Activated CD8-positive, alpha-beta T cell treated with anti-CD3 and anti-CD28 coated beads for 36 hours (primary cell): ENCODE measurements at regions of chr21 and their contacts with region 1.

Region 1: DNA sequence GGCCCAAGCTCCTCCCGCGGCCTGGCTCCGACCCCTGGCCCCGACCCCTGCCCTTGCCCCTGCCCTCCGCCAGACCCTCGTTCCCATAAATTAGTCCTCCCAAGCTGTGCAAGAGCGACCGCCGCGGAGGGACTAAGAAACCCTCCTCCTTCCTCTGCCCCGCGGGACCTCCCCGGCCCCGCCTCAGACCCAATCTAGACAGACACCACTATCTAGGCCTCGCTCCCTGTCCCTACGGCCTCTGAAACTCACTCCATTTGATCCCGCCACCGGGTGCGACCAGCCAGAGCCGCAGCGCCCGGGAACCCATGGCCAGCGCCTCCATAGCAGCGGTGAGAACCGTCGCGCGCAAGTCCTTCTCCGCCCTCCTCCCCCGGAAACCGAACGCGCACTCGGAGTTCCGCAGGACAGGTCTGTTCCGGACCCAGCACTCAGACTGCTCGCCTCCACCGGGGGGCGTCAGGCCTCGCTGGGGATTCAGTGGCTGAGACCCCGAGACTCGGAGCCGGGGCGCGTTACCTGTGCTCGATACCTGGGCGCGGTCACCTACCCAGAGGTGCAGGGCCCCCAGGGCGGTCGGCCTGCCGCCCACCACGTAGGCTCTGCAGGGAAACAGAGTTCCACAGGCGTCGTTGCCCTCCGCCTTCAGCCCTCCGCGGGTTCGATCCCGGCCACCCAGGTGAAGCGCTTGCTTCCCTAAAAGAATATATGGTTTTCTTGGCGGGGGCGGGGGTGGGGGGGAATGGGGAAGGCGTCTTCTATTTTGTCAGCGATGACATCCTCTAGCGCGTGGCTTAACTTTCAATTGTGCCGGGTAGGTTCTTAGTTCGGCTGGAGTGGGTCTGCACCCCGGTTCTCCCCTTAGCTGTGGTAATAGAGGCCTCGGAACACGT is at the start of gene MRPL39:
- DNase-seq: peak; percentile 92
- ATAC-seq: peak; percentile 94
- H3K4me3 Mint-ChIP-seq: peak within 1 kb of the TSS; percentile 100
- H3K27ac Mint-ChIP-seq: peak within 1 kb of the TSS; percentile 99
- H3K4me1 Mint-ChIP-seq: peaks cover 33% of the 10 kb centered on the region
- H3K27me3 Mint-ChIP-seq: no peaks in the 10 kb centered on the region
- CTCF ChIP-seq: peak; percentile 50
- total RNA-seq, gene MRPL39: 67.1 to 71.0 TPM

Region 2: GRCh38 chr21:25199944-25200343 is 407.5 kb before region 1 on chr21:
- CTCF ChIA-PET with region 1: no interaction called
- POLR2A ChIA-PET with region 1: no interaction called
- intact Hi-C with region 1: no loop called
- DNase-seq: no peak
- ATAC-seq: no peak
- H3K4me3 Mint-ChIP-seq: no peak overlapping the region
- H3K27ac Mint-ChIP-seq: no peak overlapping the region
- H3K4me1 Mint-ChIP-seq: no peaks in the 10 kb centered on the region
- H3K27me3 Mint-ChIP-seq: no peaks in the 10 kb centered on the region
- CTCF ChIP-seq: no peak

Region 3: GRCh38 chr21:25243808-25244207 is 363.6 kb before region 1 on chr21:
- CTCF ChIA-PET with region 1: no interaction called
- POLR2A ChIA-PET with region 1: no interaction called
- intact Hi-C with region 1: no loop called
- DNase-seq: no peak
- ATAC-seq: no peak
- H3K4me3 Mint-ChIP-seq: no peak overlapping the region
- H3K27ac Mint-ChIP-seq: no peak overlapping the region
- H3K4me1 Mint-ChIP-seq: no peaks in the 10 kb centered on the region
- H3K27me3 Mint-ChIP-seq: no peaks in the 10 kb centered on the region
- CTCF ChIP-seq: no peak

Region 4: DNA sequence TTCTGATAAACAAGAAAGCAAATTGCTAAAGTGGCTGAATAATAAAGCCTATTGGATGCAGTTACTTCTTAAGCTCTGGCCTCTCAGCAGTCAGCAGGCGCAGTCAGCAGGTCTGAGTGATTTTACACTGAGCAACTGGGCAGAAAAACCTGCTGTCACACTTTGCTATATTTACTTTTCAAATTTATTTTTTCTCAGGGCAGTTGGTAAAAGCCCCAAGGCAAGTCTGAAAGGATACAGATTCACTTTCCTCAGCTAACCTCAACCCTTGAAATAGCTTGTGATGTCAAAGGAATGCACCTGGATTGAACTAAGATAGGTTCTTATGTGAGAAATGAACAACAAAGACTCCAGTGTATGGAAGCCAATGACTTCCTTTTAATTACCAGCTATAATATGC is 93.3 kb after region 1 on chr21:
- CTCF ChIA-PET with region 1: interaction called, 79 read pairs
- POLR2A ChIA-PET with region 1: no interaction called
- intact Hi-C with region 1: no loop called
- DNase-seq: no peak
- ATAC-seq: no peak
- H3K4me3 Mint-ChIP-seq: no peak overlapping the region
- H3K27ac Mint-ChIP-seq: no peak overlapping the region
- H3K4me1 Mint-ChIP-seq: no peaks in the 10 kb centered on the region
- H3K27me3 Mint-ChIP-seq: no peaks in the 10 kb centered on the region
- CTCF ChIP-seq: no peak

Region 5: DNA sequence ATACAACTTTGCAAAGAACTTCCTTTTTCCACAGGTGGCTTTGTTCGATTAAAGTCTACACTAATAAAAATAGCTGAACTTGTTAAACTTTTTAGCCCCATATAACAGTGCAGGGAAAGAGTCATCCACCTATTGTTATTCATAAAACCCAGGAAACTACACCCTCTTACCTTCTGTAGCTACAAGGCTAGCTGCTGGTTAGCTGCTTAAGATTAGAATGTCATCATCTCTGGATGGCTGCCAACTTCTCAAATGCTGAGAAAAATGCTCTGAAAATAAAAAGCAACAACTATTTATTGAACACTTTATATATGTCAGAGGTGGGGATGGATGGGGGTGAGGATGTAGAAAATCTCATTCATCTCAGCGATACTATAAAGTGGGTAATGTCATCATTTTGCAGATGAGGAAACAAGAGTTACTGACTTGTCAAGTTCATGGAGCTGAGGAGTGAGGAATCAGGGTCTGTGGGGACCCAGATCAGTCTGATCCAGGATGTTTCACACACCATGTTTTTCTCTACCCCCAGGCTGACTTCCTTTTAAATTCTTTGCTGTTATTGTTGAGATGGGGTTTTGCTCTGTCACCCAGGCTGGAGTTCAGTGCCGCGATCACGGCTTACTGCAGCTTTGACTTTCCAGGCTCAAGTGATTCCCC is 110.2 kb after region 1 on chr21:
- CTCF ChIA-PET with region 1: interaction called, 30 read pairs
- POLR2A ChIA-PET with region 1: interaction called, 4 read pairs
- intact Hi-C with region 1: no loop called
- DNase-seq: no peak
- ATAC-seq: no peak
- H3K4me3 Mint-ChIP-seq: no peak overlapping the region
- H3K27ac Mint-ChIP-seq: no peak overlapping the region
- H3K4me1 Mint-ChIP-seq: no peaks in the 10 kb centered on the region
- H3K27me3 Mint-ChIP-seq: no peaks in the 10 kb centered on the region
- CTCF ChIP-seq: no peak

Region 6: DNA sequence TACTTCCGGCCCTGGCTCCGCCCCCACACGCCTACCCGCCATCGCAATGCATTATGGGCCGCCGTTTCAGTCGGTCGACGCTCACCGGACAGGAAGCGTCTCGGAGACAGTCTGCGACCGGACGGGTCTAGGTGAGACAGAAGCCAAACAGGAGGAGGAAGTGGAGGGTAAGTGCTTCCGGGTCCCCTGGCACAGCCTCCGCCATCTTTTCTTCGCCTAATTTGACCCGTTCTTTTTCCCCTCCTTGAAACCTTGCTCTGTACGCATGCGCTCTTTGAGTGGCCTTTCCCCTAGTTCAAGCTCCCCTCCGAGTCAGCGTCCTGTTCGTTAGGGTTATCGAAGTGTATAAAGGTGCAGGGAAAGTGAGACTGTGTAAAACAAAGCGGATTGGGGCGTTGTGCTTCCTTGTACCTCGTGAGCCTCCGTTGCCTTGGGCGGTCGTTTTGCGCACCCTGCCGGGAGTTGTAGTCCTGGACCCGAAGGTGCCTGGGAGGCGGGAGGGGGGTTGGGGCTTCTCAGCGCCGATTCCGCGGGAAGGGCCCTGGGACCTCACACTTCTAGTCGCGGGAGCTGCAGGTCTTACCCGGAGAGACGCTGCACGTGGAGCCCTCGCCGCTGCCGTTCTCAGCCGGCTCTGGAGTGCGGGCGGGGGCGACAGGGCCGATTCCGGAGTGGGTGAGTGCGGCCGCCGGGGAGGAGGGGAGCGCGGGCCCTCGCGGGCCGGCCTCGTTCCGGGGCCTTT is 127.7 kb after region 1 on chr21 and contains the starts of genes ATP5PF and GABPA:
- CTCF ChIA-PET with region 1: interaction called, 11 read pairs
- POLR2A ChIA-PET with region 1: interaction called, 7 read pairs
- intact Hi-C with region 1: loop called (anchors 1 kb)
- DNase-seq: peak; percentile 98
- ATAC-seq: peak; percentile 94
- H3K4me3 Mint-ChIP-seq: peak within 1 kb of the TSS; percentile 91
- H3K27ac Mint-ChIP-seq: peak within 1 kb of the TSS; percentile 100
- H3K4me1 Mint-ChIP-seq: peaks cover 50% of the 10 kb centered on the region
- H3K27me3 Mint-ChIP-seq: no peaks in the 10 kb centered on the region
- CTCF ChIP-seq: no peak
- total RNA-seq, gene ATP5PF: 154 to 159 TPM
- total RNA-seq, gene GABPA: 21.8 to 24.9 TPM

Region 7: DNA sequence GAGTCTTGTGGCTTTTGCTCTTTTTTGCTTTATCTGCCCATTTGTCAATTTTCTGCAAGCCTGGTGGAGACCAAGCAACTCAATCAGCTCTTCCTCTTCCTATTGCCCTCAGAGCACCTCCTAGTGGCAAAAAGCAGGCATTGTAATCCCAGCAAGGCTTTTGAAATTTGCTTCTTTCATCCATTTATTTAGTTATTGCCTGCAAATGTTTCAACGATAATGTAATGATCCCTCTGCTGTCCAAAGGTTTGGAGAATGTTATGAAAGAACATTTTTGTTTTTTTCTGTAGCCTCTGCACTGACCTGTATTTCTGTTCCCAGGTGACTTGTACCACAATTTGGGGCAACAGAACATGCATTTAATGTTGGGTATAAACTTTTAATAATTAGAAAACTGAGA is 255.2 kb after region 1 on chr21:
- CTCF ChIA-PET with region 1: interaction called, 13 read pairs
- POLR2A ChIA-PET with region 1: no interaction called
- intact Hi-C with region 1: loop called (anchors 5 kb)
- DNase-seq: peak; percentile 33
- ATAC-seq: peak; percentile 58
- H3K4me3 Mint-ChIP-seq: no peak overlapping the region
- H3K27ac Mint-ChIP-seq: no peak overlapping the region
- H3K4me1 Mint-ChIP-seq: no peaks in the 10 kb centered on the region
- H3K27me3 Mint-ChIP-seq: peaks cover 4% of the 10 kb centered on the region
- CTCF ChIP-seq: peak; percentile 83